ENCODE measurements at regions of chr6 and their contacts with region 1.

Region 1: DNA sequence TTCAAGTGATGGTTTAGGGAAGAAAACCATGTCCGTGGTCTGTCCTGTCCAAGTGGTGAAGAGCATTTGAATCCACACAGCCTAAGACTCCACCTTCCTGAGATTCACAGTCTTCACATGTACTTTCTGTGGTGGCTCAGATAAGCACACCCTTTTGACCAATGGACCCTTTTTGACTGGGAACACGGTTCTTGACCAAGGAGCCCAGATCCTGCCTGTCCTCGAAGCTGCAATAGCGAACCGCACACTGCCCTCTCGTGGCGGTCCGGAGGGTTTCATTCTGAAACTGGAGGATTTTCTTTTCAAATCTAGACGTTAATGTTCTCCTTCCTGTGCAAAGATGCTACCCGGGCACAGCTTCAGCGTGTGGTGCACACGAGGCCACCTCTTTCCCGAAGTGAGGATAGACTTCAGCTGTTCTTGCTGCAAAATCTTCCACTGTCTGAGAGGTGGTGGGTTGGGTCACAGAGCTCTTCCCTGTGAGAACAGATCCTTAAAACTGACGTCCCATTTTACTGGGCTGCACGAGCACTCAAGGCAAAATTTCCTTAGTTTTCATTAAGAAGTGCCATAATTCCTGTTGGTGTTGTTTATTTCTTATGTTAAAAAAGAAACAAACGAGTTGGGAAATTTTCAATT is 90.5 kb downstream of the SYNJ2 start:
- DNase-seq: peak; percentile 66 to 89 (median 76)
- H3K4me3 ChIP-seq: no peak overlapping the region
- H3K27ac ChIP-seq: peak overlapping the region in 1 of 5 donors; percentile 26
- H3K4me1 ChIP-seq: peaks cover 0 to 3% of the 10 kb centered on the region in 2 donors
- H3K27me3 ChIP-seq: no peaks in the 10 kb centered on the region
- CTCF ChIP-seq: peak; percentile 72 to 87 (median 83)
- POLR2A ChIP-seq: no peak

Region 2: DNA sequence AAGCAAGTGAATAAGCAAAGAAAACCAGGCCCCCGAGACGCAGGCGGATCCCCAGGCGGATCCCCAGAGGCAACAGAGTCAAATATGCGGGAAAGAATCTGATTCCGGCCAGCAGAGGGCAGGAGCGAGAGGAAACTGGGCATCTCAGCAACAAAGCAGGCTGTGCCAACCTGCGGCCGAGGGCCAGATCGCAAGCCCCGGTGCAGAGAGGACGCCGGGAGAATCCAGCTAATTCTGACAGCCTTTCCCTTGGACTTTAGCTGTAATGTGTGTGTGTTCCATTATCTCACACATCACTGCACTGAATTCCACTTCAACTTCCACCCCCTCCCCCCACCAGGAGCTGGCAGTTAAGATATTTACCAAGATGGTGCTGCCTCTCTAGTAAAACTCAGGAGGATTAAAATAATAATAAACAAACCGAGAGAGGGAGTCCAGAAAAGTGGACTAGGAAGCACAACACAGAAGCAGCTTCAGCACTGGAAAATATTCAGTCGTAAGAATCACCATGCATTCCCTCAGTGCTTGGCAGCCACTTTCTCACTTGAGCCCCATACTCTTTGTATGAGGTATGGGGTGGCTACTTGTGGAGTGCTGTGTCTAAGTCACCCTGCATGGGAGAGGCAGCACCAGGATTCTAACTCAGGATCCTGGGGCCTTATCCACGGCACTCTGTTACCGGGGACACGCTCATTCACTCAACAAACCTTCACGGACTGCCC is 315.3 kb before region 1 on chr6:
- intact Hi-C with region 1: loop called (anchors 5 to 10 kb)
- DNase-seq: peak; percentile 87 to 96 (median 93)
- H3K4me3 ChIP-seq: no peak overlapping the region
- H3K27ac ChIP-seq: peak overlapping the region in 1 of 5 donors; percentile 37
- H3K4me1 ChIP-seq: peaks cover 5 to 19% of the 10 kb centered on the region in 2 donors
- H3K27me3 ChIP-seq: no peaks in the 10 kb centered on the region
- CTCF ChIP-seq: peak; percentile 82 to 96 (median 92)
- POLR2A ChIP-seq: no peak

Region 3: DNA sequence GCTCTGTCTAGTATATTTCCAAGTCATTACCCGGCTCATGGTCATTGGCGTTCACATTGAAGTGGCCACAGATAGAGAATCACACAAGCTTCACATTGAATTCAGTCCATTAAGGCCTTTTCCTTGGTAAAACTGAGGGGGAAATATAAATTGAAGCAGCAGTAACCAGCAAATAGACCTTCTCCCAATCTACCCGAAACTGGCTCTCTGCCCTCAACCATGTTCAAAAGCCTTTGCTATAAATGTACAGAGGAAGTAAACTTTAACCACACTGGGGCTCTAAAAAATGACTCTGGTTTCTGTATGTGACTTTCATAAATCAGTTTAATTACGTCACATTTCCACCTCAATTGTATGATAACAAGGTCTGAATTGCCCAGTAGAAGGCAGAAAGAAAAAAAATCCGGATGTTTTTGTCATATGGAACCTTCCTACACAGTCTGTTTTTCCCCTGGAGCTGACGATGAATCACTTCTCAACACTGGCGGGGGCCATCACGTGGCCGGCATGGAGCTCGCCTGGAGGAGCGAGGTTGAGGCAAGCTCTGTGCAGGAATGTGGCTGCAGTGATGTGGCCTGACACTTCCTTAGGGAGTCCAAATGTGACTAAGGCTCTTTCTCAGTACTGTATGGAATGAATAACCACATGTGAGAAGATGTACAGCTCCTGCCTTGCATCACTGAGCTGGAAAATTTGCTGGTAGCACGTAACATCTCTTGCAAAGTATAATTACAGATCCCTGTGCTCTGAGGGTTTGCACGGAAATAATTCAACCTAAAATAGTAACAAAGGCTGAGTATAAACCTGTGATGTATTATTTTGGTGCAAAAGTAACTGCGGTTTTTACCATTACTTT is 307.8 kb before region 1 on chr6:
- intact Hi-C with region 1: loop called (anchors 5 to 10 kb)
- DNase-seq: peak; percentile 75 to 92 (median 89)
- H3K4me3 ChIP-seq: no peak overlapping the region
- H3K27ac ChIP-seq: peak overlapping the region; percentile 1 to 80 (median 51)
- H3K4me1 ChIP-seq: peaks cover 27 to 49% of the 10 kb centered on the region in 2 donors
- H3K27me3 ChIP-seq: no peaks in the 10 kb centered on the region
- CTCF ChIP-seq: no peak
- POLR2A ChIP-seq: no peak

Region 4: GRCh38 chr6:157981395-157982296 is 90.6 kb before region 1 on chr6 and contains the start of gene SYNJ2:
- intact Hi-C with region 1: loop called in 1 of 2 experiments (anchors 5 kb)
- DNase-seq: peak; percentile 75 to 84 (median 78)
- H3K4me3 ChIP-seq: peak within 1 kb of the TSS; percentile 22 to 90 (median 60)
- H3K27ac ChIP-seq: peak within 1 kb of the TSS in 4 of 5 donors; percentile 8 to 85 (median 68)
- H3K4me1 ChIP-seq: peaks cover 0 to 30% of the 10 kb centered on the region in 2 donors
- H3K27me3 ChIP-seq: no peaks in the 10 kb centered on the region
- CTCF ChIP-seq: peak; percentile 28 to 60 (median 48)
- POLR2A ChIP-seq: peak; percentile 46 to 64
- total RNA-seq, gene SYNJ2: 1.6 to 20.5 (median 16.0) TPM

Region 5: DNA sequence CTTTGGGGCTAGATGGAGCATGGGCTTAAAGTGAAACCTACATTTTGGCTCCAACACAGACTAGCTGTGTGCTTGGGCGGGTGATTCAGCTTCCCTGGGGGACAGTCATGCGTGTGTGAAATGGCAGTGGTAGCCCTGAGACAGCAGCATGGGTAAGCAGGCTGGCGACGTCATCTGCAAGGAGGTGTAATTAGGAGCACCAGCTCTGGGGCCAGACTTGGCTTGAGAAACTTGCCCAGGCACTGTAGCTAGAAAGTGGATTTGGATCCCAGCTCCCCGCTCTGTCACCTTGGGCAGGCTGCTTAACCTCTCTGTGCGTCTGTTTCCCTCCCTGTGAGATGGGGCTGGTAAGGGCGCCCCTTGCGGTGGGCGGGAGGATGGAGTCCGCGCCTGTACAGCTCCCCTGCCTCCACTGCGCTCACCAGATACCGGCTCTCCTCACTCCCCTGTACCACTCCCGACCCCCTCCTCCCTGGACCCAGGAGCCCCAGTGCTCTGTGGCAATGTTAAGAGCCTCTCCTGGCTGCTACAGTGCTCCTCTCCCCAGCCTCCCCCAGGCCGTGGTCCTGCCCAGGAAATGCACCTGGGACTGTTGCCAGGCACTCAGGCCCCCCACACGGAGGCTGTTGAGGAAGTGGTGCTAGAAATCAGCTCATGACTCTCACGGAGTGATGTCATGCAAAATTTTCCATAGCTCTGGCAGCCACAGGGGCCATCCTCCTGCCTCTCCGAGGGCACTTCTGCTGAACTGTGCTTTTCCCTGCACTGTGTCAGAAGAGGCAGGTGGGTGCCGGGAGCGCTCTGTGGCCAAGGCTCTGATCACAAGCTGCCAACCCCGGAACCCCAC is 45.9 kb before region 1 on chr6:
- intact Hi-C with region 1: loop called in 1 of 2 experiments (anchors 10 kb)
- DNase-seq: peak; percentile 72 to 90 (median 88)
- H3K4me3 ChIP-seq: peak overlapping the region in 1 of 4 donors; percentile 0
- H3K27ac ChIP-seq: peak overlapping the region in 4 of 5 donors; percentile 36 to 82 (median 72)
- H3K4me1 ChIP-seq: peaks cover 13 to 16% of the 10 kb centered on the region in 2 donors
- H3K27me3 ChIP-seq: no peaks in the 10 kb centered on the region
- CTCF ChIP-seq: peak in 4 of 6 experiments; percentile 36 to 54 (median 51)
- POLR2A ChIP-seq: peak in 1 of 2 donors; percentile 22